ENCODE measurements at regions of chr1 and their contacts with region 1.

Region 1: GRCh38 chr1:153598309-153599172 is 14.4 kb downstream of the S100A16 start:
- DNase-seq: peak; percentile 91
- ATAC-seq: peak; percentile 95
- H3K4me3 ChIP-seq: peak overlapping the region in 1 of 5 experiments; percentile 15
- H3K4me3 Mint-ChIP-seq: peak overlapping the region; percentile 68
- H3K27ac ChIP-seq: peak overlapping the region; percentile 94 to 97
- H3K27ac Mint-ChIP-seq: peak overlapping the region; percentile 96
- H3K4me1 ChIP-seq: peaks cover 27 to 39% of the 10 kb centered on the region in 2 donors
- H3K4me1 Mint-ChIP-seq: peaks cover 39% of the 10 kb centered on the region
- H3K27me3 ChIP-seq: no peaks in the 10 kb centered on the region
- H3K27me3 Mint-ChIP-seq: no peaks in the 10 kb centered on the region
- CTCF ChIP-seq: no peak

Region 2: GRCh38 chr1:153488731-153489130 is 109.8 kb before region 1 on chr1:
- CTCF ChIA-PET with region 1: no interaction called
- POLR2A ChIA-PET with region 1: no interaction called
- intact Hi-C with region 1: no loop called
- DNase-seq: no peak
- ATAC-seq: no peak
- H3K4me3 ChIP-seq: no peak overlapping the region
- H3K4me3 Mint-ChIP-seq: no peak overlapping the region
- H3K27ac ChIP-seq: no peak overlapping the region
- H3K27ac Mint-ChIP-seq: no peak overlapping the region
- H3K4me1 ChIP-seq: no peaks in the 10 kb centered on the region
- H3K4me1 Mint-ChIP-seq: no peaks in the 10 kb centered on the region
- H3K27me3 ChIP-seq: peaks cover 0 to 14% (median under 1%) of the 10 kb centered on the region in 4 experiments
- H3K27me3 Mint-ChIP-seq: peaks cover 57% of the 10 kb centered on the region
- CTCF ChIP-seq: no peak

Region 3: DNA sequence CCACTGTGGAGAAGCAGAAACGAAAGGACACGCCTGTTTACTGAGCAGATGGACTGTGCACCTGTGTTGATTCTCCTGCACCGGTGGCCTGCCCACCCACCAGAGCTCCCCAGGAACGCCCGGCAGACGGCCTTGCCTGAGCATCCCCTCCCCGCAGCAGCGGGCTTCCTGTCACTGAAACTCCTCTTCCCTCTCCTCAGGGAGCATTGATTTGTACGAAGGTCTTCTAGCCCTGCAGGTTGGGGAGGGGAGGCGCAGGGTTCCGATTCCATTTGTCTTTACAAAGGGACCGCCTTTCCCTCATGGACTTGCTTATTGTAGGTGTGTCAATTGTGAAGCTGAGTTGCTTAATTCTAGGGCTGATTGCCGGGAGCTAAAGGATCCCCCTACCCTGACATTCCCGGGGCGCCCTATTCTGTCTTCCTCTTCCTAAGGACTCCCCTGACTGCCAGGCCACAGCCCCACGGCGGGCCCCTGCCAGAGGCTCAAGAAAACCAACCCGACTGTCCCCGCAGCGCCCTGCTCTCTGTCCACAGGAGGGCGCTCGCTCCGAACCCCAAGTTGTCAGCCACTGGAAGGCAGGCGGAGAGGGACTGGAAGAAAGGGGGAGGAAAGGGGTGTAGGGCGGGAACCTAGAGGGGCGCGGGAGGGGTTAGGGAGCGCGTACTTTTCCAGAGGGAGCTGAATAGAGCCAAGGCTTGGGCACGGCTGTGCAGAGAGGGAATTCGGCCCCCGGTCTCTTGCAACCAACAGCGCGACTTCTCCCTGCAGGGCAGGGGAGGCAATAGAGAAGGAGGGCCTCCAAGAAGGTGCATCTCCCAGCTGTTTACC is 65.6 kb before region 1 on chr1:
- CTCF ChIA-PET with region 1: interaction called, 6 read pairs
- POLR2A ChIA-PET with region 1: interaction called, 5 read pairs
- intact Hi-C with region 1: loop called (anchors 2 kb)
- DNase-seq: peak; percentile 73
- ATAC-seq: peak; percentile 13
- H3K4me3 ChIP-seq: no peak overlapping the region
- H3K4me3 Mint-ChIP-seq: peak overlapping the region; percentile 47
- H3K27ac ChIP-seq: peak overlapping the region; percentile 2 to 26
- H3K27ac Mint-ChIP-seq: peak overlapping the region; percentile 50
- H3K4me1 ChIP-seq: peaks cover 38 to 48% of the 10 kb centered on the region in 2 donors
- H3K4me1 Mint-ChIP-seq: peaks cover 41% of the 10 kb centered on the region
- H3K27me3 ChIP-seq: no peaks in the 10 kb centered on the region
- H3K27me3 Mint-ChIP-seq: no peaks in the 10 kb centered on the region
- CTCF ChIP-seq: peak; percentile 71

Region 4: GRCh38 chr1:153658400-153659174 is 60.0 kb after region 1 on chr1 and contains the start of gene SNAPIN:
- CTCF ChIA-PET with region 1: no interaction called
- POLR2A ChIA-PET with region 1: no interaction called
- intact Hi-C with region 1: loop called (anchors 1 kb)
- DNase-seq: peak; percentile 93
- ATAC-seq: peak; percentile 99
- H3K4me3 ChIP-seq: peak within 1 kb of the TSS; percentile 77 to 87 (median 82)
- H3K4me3 Mint-ChIP-seq: peak within 1 kb of the TSS; percentile 96
- H3K27ac ChIP-seq: peak within 1 kb of the TSS; percentile 68 to 83
- H3K27ac Mint-ChIP-seq: peak within 1 kb of the TSS; percentile 91
- H3K4me1 ChIP-seq: peaks cover 5 to 15% of the 10 kb centered on the region in 2 donors
- H3K4me1 Mint-ChIP-seq: peaks cover 12% of the 10 kb centered on the region
- H3K27me3 ChIP-seq: no peaks in the 10 kb centered on the region
- H3K27me3 Mint-ChIP-seq: no peaks in the 10 kb centered on the region
- CTCF ChIP-seq: no peak
- total RNA-seq, gene SNAPIN: 37.6 and 39.4 TPM in 2 replicates

Region 5: DNA sequence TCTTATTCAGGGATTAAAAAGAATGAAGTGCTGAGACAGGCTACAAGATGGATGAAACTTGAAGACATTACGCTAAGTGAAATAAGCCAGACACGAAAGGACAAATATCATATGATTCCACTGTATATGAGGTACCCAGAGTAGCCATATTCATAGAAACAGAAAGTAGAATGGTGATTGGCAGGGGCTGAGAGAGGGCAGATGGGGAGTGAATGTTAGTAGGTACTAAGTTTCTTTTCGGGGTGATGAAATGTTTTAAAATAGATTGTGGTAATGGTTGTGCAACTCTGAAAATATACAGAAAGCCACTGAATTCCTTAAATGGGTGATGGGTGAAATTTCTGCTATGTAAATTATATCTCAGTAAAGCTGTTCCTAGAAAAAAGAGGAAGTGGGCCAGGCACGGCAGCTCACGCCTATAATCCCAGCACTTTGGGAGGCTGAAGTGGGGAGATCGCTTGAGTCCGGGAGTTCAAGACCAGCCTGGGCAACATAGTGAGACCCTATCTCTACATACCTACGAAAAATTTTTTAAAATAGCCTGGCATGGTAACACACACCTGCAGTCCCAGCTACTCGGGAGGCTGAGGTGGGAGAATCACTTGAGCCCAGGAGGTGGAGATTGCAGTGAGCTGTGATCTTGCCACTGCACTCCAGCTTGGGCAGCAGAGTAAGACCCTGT is 192.6 kb after region 1 on chr1:
- CTCF ChIA-PET with region 1: no interaction called
- POLR2A ChIA-PET with region 1: no interaction called
- intact Hi-C with region 1: no loop called
- DNase-seq: peak; percentile 86
- ATAC-seq: peak; percentile 94
- H3K4me3 ChIP-seq: peak overlapping the region in 4 of 5 experiments; percentile 11 to 59 (median 44)
- H3K4me3 Mint-ChIP-seq: peak overlapping the region; percentile 59
- H3K27ac ChIP-seq: peak overlapping the region; percentile 91 to 92
- H3K27ac Mint-ChIP-seq: peak overlapping the region; percentile 95
- H3K4me1 ChIP-seq: peaks cover 28 to 34% of the 10 kb centered on the region in 2 donors
- H3K4me1 Mint-ChIP-seq: peaks cover 36% of the 10 kb centered on the region
- H3K27me3 ChIP-seq: no peaks in the 10 kb centered on the region
- H3K27me3 Mint-ChIP-seq: no peaks in the 10 kb centered on the region
- CTCF ChIP-seq: no peak

Measured in B cell (primary cell).